Heart left ventricle (tissue), 16 donors: ENCODE measurements at regions of chr13 and their contacts with region 1.

Region 1: DNA sequence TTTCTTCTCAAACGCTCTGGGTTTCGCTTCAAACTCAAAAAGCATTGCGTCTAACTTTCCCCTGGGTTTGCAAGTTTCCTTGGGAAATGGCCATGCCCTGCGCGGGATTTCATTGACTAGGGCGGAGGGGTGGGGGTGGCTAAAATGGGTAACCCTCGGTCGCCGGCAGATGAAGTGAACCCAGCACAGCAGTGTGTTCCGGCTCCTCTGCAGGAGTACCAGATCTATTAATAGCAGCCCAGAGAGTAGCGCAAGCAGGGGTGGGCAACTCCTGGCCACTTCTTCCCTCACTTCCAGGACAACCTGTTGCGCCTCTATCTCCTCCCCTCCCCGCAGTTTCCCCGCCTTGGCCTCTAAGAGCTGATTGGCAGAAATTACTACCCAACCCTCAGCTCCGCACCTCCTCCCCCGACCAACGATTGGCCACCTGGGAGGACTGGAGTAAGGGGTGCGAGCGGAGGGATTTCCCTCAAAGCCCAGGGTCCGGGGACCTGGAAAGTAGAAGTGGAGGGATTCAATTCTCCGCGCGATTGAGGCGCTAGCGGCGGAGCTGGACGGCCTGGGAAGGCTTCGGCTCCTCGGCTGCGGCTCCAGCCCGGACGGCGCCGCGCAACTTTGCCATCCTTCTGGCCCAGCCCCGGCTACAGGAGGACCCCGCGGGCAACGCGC is at the start of gene FREM2:
- DNase-seq: peak in 1 of 5 donors; percentile 25
- ATAC-seq: peak; percentile 59 to 70 (median 64)
- H3K4me3 ChIP-seq: peak within 1 kb of the TSS; percentile 18 to 52 (median 38)
- H3K27ac ChIP-seq: no peak within 1 kb of the TSS
- H3K4me1 ChIP-seq: peaks cover 0 to 20% (median 0%) of the 10 kb centered on the region in 12 donors
- H3K27me3 ChIP-seq: peaks cover 0 to 47% (median 12%) of the 10 kb centered on the region in 9 donors
- CTCF ChIP-seq: no peak
- POLR2A ChIP-seq: no peak
- total RNA-seq, gene FREM2: 0.02 to 0.35 (median 0.18) TPM

Region 2: DNA sequence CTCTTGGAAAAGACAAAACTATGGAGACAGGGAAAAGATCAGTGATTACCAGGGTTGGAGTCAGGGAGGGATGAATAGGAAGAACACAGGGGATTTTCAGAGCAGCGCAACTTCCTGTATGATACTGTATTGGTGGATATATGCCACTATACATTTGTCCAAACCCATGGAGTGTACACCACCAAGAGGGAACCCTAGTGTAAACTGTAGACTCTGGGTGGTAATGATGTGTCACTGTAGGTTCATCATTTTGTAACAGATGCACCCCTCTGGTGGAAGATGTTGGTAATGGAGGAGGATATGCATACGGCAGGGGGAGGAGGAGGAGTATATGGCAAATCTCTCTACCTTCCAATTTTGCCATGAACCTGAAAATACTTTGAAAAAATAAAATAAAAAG is 269.0 kb before region 1 on chr13:
- intact Hi-C with region 1: no loop called
- DNase-seq: no peak
- ATAC-seq: no peak
- H3K4me3 ChIP-seq: no peak overlapping the region
- H3K27ac ChIP-seq: no peak overlapping the region
- H3K4me1 ChIP-seq: peaks cover 0 to 23% (median 0%) of the 10 kb centered on the region in 12 donors
- H3K27me3 ChIP-seq: no peaks in the 10 kb centered on the region
- CTCF ChIP-seq: peak in 6 of 12 donors; percentile 11 to 38 (median 28)
- POLR2A ChIP-seq: no peak

Region 3: GRCh38 chr13:38670627-38671026 is 16.1 kb before region 1 on chr13:
- intact Hi-C with region 1: no loop called
- DNase-seq: no peak
- ATAC-seq: no peak
- H3K4me3 ChIP-seq: no peak overlapping the region
- H3K27ac ChIP-seq: no peak overlapping the region
- H3K4me1 ChIP-seq: no peaks in the 10 kb centered on the region
- H3K27me3 ChIP-seq: peaks cover 0 to 34% (median 0%) of the 10 kb centered on the region in 9 donors
- CTCF ChIP-seq: no peak
- POLR2A ChIP-seq: no peak

Region 4: DNA sequence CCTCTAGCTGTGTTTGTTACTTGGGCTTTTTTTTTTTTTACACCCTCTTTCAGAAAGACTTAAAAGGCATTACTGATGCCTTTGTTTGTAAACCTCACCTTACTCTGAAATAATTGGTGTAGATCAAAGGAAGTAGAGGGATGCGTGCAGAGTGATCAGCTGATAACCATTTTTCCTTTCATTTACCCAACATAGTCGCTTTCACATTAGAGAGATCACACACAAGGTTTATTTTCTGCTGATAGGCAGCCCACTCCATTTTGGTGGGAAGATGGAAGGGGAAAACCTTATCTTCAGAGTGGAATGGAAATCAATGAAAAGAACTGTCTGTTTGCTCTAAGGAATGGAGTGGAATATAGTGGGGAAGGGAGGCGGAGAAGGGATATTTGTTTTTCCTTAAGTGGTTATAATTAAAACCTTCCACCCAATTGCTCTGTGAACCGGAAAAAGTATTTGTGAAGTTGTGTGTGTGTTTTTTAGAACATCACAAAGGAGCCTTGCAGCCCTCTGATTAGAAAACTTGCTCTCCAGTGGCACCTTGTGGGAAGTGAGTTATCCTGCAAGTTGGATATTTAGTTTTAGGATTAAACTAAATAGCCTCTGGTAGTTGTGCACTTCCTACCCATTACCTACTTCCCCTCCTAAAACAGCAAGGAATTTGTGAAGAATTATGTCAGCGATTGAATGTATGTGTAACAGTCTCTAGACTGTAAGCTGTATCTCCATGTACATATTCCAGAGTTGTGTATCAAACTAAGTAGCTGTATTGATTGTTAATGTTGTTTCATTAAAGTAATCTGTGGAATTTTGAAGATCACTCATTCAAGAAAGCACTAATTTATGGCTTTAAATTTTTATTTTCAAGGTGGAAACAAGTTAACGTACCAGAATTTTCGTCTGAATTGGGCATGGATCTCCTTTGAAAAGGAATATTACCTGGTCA is 77.0 kb after region 1 on chr13:
- intact Hi-C with region 1: loop called in 8 of 10 experiments (anchors 1 to 5 kb)
- DNase-seq: no peak
- ATAC-seq: no peak
- H3K4me3 ChIP-seq: no peak overlapping the region
- H3K27ac ChIP-seq: no peak overlapping the region
- H3K4me1 ChIP-seq: no peaks in the 10 kb centered on the region
- H3K27me3 ChIP-seq: peaks cover 0 to 26% (median 3%) of the 10 kb centered on the region in 9 donors
- CTCF ChIP-seq: peak; percentile 26 to 62 (median 45)
- POLR2A ChIP-seq: no peak

Region 5: GRCh38 chr13:38872693-38873092 is 186.0 kb after region 1 on chr13:
- intact Hi-C with region 1: loop called in 2 of 10 experiments (anchors 2 to 10 kb)
- DNase-seq: peak in 2 of 5 donors; percentile 8 to 30
- ATAC-seq: no peak
- H3K4me3 ChIP-seq: no peak overlapping the region
- H3K27ac ChIP-seq: no peak overlapping the region
- H3K4me1 ChIP-seq: no peaks in the 10 kb centered on the region
- H3K27me3 ChIP-seq: peaks cover 0 to 8% (median 0%) of the 10 kb centered on the region in 9 donors
- CTCF ChIP-seq: peak; percentile 12 to 56 (median 39)
- POLR2A ChIP-seq: no peak

Region 6: DNA sequence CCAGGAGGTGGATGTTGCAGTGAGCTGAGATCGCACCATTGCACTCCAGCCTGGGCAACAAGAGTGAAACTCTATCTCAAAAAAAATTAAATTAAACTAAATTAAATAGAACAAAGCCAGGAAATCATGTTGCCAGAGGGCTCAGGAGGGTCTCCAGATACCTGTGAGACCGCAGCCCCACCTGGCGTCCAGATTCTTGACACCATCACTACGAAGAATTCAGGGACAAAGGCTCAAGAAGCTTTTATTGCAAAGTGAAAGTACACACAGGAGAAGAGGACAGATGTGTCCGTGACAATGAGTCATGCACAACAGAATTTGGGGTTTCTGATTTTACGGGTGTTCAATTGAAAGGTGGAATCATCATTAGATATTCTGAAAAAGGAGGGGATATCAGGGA is 227.4 kb after region 1 on chr13:
- intact Hi-C with region 1: loop called in 2 of 10 experiments (anchors 5 to 10 kb)
- DNase-seq: no peak
- ATAC-seq: no peak
- H3K4me3 ChIP-seq: no peak overlapping the region
- H3K27ac ChIP-seq: no peak overlapping the region
- H3K4me1 ChIP-seq: no peaks in the 10 kb centered on the region
- H3K27me3 ChIP-seq: peaks cover 0 to 5% (median 0%) of the 10 kb centered on the region in 9 donors
- CTCF ChIP-seq: no peak
- POLR2A ChIP-seq: no peak